ENCODE measurements at regions of chr2 and their contacts with region 1.

Region 1: GRCh38 chr2:202221873-202222272 is 16.5 kb downstream of the SUMO1 start:
- DNase-seq: no peak
- ATAC-seq: no peak
- H3K4me3 Mint-ChIP-seq: no peak overlapping the region
- H3K27ac Mint-ChIP-seq: no peak overlapping the region
- H3K4me1 Mint-ChIP-seq: peaks cover 12% of the 10 kb centered on the region
- H3K27me3 Mint-ChIP-seq: no peaks in the 10 kb centered on the region
- CTCF ChIP-seq: no peak

Region 2: DNA sequence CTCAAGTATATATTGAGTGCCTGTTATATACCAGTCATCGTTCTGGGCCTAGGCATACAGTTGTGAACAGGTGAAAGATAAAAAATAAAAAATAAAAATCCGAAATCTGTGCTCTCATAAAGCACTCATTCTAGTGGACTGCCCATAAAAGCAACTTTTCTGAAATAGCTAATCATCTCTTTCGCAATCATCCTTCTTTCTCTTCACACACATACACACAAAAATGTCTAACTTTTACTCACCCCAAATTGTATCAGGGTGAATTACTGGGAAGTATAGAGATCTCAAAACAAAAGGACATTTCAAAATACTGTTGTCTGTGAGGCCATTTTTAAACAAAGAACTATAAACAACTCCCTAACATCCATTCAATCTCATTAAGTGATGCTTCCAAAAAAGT is 1228.8 kb before region 1 on chr2:
- CTCF ChIA-PET with region 1: no interaction called
- POLR2A ChIA-PET with region 1: interaction called, 16 read pairs
- intact Hi-C with region 1: no loop called
- DNase-seq: no peak
- ATAC-seq: no peak
- H3K4me3 Mint-ChIP-seq: no peak overlapping the region
- H3K27ac Mint-ChIP-seq: no peak overlapping the region
- H3K4me1 Mint-ChIP-seq: no peaks in the 10 kb centered on the region
- H3K27me3 Mint-ChIP-seq: no peaks in the 10 kb centered on the region
- CTCF ChIP-seq: no peak

Region 3: GRCh38 chr2:202238234-202239197 is 16.6 kb after region 1 on chr2 and contains the start of gene SUMO1:
- CTCF ChIA-PET with region 1: no interaction called
- POLR2A ChIA-PET with region 1: no interaction called
- intact Hi-C with region 1: no loop called
- DNase-seq: peak; percentile 86
- ATAC-seq: peak; percentile 94
- H3K4me3 Mint-ChIP-seq: peak within 1 kb of the TSS; percentile 100
- H3K27ac Mint-ChIP-seq: peak within 1 kb of the TSS; percentile 93
- H3K4me1 Mint-ChIP-seq: peaks cover 36% of the 10 kb centered on the region
- H3K27me3 Mint-ChIP-seq: no peaks in the 10 kb centered on the region
- CTCF ChIP-seq: no peak
- total RNA-seq, gene SUMO1: 78.8 and 83.9 TPM in 2 replicates

Measured in activated B cell treated with CpG ODN at 0.5 μM for 24 hours (primary cell).